HEK293T (cell line): ENCODE measurements at regions of chr17 and their contacts with region 1.

Region 1: GRCh38 chr17:76523084-76524037 is 14.1 kb downstream of the CYGB start:
- DNase-seq: peak; percentile 92

Region 2: DNA sequence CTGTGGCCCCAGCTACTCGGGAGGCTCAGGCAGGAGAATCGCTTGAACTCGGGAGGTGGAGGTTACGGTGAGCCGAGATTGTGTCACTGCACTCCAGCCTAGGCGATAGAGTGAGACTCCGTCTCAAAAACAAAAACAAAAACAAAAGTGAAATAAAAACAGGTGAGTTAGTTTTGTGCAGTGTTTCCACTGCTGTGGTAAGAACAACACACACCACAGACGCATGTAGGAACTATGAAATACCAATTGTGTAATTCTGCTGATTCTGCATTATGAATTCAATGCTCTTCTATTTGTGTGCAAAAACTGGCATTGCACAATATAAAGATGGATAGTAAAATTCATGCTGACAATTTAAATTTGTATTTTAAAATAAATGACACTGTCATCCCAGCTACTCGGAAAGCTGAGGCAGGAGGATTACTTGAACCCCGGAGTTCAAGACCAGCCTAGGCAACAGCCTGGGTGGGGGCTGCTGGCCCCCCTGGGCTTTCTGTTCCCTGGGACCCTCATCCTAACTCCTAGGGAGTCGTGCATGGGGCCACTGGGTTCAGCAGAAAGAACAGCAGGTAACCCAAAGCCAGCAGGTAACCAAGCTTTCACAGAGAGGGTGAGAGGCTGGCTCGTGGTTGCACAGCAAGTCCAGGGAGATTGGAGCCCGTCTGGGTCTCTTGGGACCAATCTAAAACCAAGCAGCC is 11.5 kb before region 1 on chr17:
- CTCF ChIA-PET with region 1: interaction called, 15 read pairs
- POLR2A ChIA-PET with region 1: interaction called, 3 read pairs
- DNase-seq: no peak

Region 3: DNA sequence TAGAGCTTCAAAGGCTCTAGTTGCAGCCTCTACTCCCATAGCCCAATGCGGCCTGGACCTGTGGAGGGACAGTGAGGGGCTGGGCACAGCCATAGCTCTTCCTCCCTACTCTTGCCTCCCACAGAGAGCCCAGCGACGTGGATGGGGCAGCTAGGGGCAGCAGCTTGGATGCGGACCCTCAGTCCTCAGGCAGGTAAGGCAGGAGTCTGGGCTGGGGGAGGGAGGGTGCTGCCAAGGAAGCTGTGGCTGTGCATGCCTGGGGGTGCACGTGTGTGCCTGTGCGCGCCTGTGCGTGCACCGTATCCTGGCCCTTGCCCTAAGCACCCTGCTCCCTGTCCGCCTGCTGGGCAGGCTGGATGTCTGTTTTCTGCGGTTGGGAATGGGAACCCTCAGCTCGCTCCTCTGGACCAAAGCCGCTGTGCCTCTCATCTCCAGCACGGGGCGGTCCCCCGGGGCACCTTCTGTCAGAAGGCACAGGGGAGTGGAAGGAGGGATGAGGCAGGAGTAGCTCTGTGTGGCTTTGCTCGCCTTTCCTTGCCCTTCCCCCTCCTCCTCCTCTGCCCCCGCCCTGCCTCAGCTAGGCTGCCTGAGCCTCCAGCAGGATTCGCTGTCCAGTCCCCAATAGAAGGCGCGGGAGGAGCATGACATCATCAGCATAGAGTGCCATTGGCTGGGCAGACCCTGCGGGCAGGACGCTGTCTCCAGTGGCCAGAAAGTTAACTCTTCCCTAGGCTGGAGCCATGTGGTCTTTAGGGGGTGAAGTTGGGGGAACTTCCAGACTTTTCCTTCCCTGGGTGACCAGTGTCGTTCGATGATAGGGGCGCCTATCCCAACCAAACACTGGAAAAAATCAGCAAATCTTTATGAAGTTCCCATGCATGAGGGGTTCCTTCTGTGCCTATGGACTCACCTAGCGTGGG is 17.3 kb after region 1 on chr17:
- CTCF ChIA-PET with region 1: interaction called, 37 read pairs
- POLR2A ChIA-PET with region 1: interaction called, 28 read pairs
- DNase-seq: peak; percentile 97

Region 4: DNA sequence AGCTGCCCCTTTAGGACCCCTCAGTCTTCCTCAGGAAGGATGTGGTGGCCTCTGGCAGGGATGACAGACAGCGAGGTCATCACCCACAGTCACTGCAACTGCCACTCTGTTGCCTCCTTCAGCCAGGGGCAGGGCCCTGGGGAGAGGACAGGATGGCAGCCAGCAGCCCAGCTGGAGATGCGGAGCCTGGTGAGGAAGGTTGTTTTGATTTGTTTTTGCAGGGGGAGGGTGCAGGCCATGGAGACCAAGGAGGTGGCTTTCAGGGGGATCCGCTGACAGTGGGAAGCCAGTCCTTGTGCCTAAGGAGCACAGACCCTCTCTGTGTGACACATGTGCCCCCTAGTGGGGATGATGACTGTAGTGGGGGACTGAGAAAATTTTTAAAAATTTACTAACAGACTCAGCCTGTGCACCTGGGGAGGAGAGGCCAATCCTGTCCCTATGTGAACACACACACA is 23.9 kb after region 1 on chr17:
- CTCF ChIA-PET with region 1: interaction called, 37 read pairs
- POLR2A ChIA-PET with region 1: interaction called, 19 read pairs
- DNase-seq: peak; percentile 74

Region 5: GRCh38 chr17:76623271-76624146 is 100.1 kb after region 1 on chr17:
- CTCF ChIA-PET with region 1: interaction called, 14 read pairs
- POLR2A ChIA-PET with region 1: no interaction called
- DNase-seq: peak; percentile 86